ENCODE measurements at regions of chr10 and their contacts with region 1.

Region 1: DNA sequence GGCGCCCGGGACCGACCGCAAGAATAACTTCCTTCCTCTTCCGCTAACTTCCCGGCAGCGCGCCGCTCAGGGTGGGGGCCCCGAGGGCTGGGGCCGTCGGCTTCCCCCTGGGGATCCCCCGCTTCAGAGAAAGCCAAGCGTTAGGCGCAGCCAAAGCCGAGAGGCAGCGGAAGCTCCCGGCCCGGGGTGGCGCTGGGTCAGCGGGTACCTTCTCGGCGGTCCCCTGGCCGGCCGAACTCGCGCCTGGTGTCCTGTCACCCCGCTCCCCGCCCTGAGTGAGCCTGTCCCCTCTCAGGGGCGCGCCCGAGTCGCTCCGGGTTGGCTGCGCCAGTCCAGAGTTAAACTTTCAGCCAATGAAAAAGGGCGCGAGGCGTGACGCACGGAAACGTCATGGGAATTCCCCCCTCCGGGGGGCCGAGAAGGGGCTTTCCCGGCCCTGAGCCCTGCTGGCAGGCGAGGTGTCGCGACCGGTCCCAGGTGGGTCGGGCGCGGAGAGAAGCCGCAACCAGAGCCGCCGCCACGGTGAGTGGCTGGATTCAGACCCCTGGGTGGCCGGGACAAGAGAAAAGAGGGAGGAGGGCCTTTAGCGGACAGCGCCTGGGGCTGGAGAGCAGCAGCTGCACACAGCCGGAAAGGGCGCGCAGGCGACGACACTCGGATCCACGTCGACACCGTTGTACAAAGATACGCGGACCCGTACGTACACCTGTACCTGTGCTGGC is 1.3 kb upstream of the NFKB2 start:
- DNase-seq: peak; percentile 99
- ATAC-seq: peak; percentile 87
- H3K4me3 Mint-ChIP-seq: peak overlapping the region; percentile 95
- H3K27ac Mint-ChIP-seq: peak overlapping the region; percentile 99
- H3K4me1 Mint-ChIP-seq: peaks cover 41% of the 10 kb centered on the region
- H3K27me3 Mint-ChIP-seq: no peaks in the 10 kb centered on the region

Region 2: DNA sequence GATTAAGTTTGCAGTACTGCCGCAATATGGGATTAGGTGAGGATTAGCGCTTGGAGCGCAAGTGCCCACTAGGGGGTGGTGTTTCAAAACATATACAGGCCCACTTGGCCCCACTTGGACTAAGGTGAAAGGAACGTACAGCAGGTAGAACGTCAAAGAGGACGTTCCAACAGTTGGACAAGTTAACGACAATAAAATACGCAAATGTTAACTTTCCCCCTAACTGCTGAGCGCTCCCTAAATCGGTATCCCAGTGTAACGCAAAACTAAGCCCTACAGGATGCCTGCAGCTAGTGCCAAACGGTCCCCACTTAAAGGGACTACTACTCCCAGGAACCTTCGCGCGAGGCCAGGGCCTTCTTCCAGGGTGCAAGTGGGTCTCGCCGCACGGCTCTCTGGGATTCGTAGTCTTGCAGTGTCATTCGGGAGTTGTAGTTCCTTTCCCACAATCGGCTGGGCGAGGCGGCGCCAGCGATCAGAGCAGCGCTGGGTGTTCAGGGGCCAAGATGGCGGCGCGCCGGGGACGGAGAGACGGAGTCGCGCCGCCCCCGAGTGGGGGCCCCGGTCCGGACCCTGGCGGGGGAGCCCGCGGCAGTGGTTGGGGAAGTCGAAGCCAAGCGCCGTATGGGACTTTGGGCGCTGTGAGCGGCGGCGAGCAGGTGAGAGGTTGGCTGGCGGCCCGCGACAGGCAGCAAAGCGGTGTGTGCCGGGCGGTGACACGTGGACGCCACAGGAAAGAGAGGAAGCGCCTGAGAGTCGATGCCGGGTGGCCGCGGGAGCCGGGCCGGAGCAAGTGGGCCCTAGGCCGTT is 261.5 kb before region 1 on chr10 and contains the start of gene PPRC1:
- CTCF ChIA-PET with region 1: interaction called, 3 read pairs
- POLR2A ChIA-PET with region 1: no interaction called
- intact Hi-C with region 1: loop called in 1 of 2 experiments (anchors 1 kb)
- DNase-seq: peak; percentile 99
- ATAC-seq: peak; percentile 96
- H3K4me3 Mint-ChIP-seq: peak within 1 kb of the TSS; percentile 94
- H3K27ac Mint-ChIP-seq: peak within 1 kb of the TSS; percentile 94
- H3K4me1 Mint-ChIP-seq: peaks cover 38% of the 10 kb centered on the region
- H3K27me3 Mint-ChIP-seq: no peaks in the 10 kb centered on the region
- total RNA-seq, gene PPRC1: 61.3 to 74.7 TPM

Region 3: DNA sequence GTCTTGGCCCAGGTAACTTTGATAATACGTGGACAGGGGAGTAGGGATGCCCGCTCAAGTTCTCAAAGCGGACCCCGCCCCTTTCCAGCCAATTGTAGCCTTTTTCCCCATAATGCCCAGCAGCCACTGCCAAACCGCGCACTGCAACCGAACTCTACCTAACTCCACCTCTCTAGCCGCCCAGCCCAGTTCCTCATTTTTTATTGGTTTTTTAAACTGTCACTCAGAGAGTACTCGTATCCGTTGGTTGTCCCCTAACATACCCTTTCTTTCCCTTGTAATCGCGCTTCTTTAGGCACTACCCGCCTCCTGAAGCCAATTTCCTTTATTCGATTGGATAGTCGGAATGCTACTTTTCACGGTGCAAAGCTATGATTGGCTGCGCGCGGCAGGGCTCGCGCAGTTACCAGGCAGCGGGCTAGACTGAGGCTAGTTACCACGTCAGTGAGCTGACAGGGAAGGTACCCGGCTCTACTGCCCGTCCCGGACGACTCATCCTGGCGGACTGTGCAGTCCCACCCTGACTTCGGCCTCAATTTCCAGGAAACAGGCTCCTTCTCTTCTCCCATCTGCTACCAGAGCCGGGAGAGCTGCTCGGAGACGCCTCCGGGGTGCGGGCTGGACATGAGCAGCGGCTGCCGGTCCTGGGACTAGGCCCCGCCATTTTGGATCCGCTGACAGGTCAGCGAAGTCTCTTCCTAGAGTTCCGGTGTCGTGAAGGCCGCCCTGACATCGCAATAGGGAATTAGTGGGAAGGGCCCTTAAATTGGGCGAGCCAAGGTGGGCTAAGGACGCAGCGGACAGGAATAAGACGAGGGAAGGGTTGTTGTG is 148.9 kb before region 1 on chr10 and contains the start of gene GBF1:
- CTCF ChIA-PET with region 1: no interaction called
- POLR2A ChIA-PET with region 1: interaction called, 3 read pairs
- intact Hi-C with region 1: loop called in 1 of 2 experiments (anchors 1 kb)
- DNase-seq: peak; percentile 94
- ATAC-seq: peak; percentile 90
- H3K4me3 Mint-ChIP-seq: peak within 1 kb of the TSS; percentile 98
- H3K27ac Mint-ChIP-seq: peak within 1 kb of the TSS; percentile 81
- H3K4me1 Mint-ChIP-seq: peaks cover 44% of the 10 kb centered on the region
- H3K27me3 Mint-ChIP-seq: peaks cover 18% of the 10 kb centered on the region
- total RNA-seq, gene GBF1: 33.1 to 37.5 TPM

Region 4: DNA sequence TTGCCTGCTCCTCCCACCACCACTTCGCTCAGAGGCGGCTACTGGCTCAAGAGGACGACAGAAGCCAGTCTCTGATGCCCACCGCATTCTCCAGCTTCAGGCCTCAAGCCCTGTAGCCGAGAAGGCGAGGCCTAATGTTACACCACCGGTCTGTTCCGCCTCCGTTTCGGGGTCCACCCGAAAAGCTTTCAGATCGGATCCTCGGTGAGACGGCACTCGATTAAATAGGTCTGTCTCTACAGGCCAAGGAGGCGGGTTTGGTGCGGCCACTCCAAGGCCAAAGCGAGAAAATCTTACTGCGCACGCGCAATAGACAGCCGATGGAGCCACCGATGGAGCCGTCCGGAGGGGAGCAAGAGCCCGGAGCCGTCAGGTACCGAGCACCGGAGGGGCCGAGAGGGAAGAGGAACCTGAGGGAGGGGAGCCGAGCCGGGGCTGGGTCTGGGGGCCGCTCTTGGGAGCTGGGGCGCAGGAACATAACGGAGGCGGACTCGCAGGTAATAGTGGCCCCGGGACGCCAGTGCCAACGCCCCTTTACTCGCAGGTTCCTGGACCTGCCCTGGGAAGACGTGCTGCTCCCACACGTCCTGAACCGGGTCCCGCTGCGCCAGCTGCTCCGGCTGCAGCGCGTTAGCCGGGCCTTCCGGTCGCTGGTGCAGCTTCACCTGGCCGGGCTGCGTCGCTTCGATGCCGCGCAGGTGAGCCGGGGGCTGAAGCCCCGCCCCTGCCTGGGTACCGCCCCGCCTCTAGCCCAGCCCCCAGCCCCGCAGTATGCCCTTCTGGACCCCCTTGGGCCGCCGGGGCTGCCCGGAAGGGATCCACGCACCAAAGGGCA is 26.8 kb after region 1 on chr10 and contains the start of gene FBXL15:
- CTCF ChIA-PET with region 1: interaction called, 67 read pairs
- POLR2A ChIA-PET with region 1: interaction called, 9 read pairs
- intact Hi-C with region 1: loop called (anchors 1 kb)
- DNase-seq: peak; percentile 98
- ATAC-seq: peak; percentile 80
- H3K4me3 Mint-ChIP-seq: peak within 1 kb of the TSS; percentile 96
- H3K27ac Mint-ChIP-seq: peak within 1 kb of the TSS; percentile 87
- H3K4me1 Mint-ChIP-seq: peaks cover 30% of the 10 kb centered on the region
- H3K27me3 Mint-ChIP-seq: peaks cover 14% of the 10 kb centered on the region
- total RNA-seq, gene FBXL15: 5.4 to 11.9 TPM

Region 5: GRCh38 chr10:102461187-102462054 is 67.2 kb after region 1 on chr10:
- CTCF ChIA-PET with region 1: interaction called, 3 read pairs
- POLR2A ChIA-PET with region 1: interaction called, 9 read pairs
- intact Hi-C with region 1: loop called in 1 of 2 experiments (anchors 1 kb)
- DNase-seq: peak; percentile 97
- ATAC-seq: peak; percentile 98
- H3K4me3 Mint-ChIP-seq: peak overlapping the region; percentile 85
- H3K27ac Mint-ChIP-seq: peak overlapping the region; percentile 73
- H3K4me1 Mint-ChIP-seq: peaks cover 27% of the 10 kb centered on the region
- H3K27me3 Mint-ChIP-seq: no peaks in the 10 kb centered on the region

Region 6: DNA sequence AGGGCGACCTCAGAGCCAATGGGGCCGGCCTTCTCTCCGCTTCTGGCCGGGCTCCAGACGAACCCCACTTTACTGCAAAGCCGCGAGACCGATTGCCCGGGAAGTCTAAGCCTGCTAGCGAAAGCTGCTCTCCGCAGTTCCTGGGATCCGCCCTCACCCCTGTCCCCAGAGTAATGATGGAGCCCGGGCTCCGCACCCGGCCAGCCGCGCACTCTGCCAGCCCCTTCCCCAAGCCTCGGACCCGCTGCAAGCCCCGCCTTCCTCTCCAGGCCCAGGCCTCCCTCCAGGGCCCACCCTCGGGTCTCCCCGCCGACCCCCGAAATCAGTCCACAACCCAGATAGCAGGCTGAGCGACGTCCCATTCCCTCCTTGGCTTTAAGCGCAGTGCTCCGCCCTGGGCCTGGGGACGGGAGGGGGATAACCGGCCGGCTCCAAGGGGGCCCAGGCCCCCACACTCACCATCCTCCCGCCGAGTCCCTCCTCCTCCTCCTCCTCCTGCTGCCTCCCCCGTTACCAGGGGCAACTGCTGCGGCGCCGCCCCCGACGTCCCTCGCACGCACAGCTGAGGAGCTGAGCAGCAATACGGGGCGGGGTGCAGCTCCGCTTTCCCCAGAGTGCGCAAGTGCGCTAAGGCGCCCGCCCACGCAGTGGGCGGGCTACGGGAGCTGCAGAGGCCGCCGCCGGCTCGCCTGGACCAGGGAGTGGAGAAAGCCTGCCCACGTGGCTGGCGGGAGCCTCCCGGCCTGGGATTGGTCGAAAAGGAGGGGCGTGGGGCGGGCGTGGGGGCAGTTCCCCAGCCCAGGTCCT is 319.8 kb after region 1 on chr10 and contains the start of gene ARL3:
- CTCF ChIA-PET with region 1: no interaction called
- POLR2A ChIA-PET with region 1: no interaction called
- intact Hi-C with region 1: loop called in 1 of 2 experiments (anchors 1 kb)
- DNase-seq: peak; percentile 99
- ATAC-seq: peak; percentile 90
- H3K4me3 Mint-ChIP-seq: peak within 1 kb of the TSS; percentile 82
- H3K27ac Mint-ChIP-seq: peak within 1 kb of the TSS; percentile 81
- H3K4me1 Mint-ChIP-seq: peaks cover 59% of the 10 kb centered on the region
- H3K27me3 Mint-ChIP-seq: no peaks in the 10 kb centered on the region
- total RNA-seq, gene ARL3: 6.4 to 6.9 TPM